ENCODE measurements at regions of chr1 and their contacts with region 1.

Region 1: GRCh38 chr1:45011837-45012638 is at the start of gene UROD:
- DNase-seq: peak; percentile 96
- H3K4me3 Mint-ChIP-seq: peak within 1 kb of the TSS; percentile 82
- H3K27ac Mint-ChIP-seq: peak within 1 kb of the TSS; percentile 92
- H3K4me1 Mint-ChIP-seq: peaks cover 41% of the 10 kb centered on the region
- H3K27me3 Mint-ChIP-seq: no peaks in the 10 kb centered on the region
- total RNA-seq, gene UROD: 105 to 106 TPM

Region 2: GRCh38 chr1:44730741-44731512 is 281.1 kb before region 1 on chr1 and contains the start of gene RNU5D-1:
- CTCF ChIA-PET with region 1: interaction called, 9 read pairs
- POLR2A ChIA-PET with region 1: interaction called, 26 read pairs
- intact Hi-C with region 1: loop called (anchors 2 kb)
- DNase-seq: peak; percentile 96
- H3K4me3 Mint-ChIP-seq: peak within 1 kb of the TSS; percentile 69
- H3K27ac Mint-ChIP-seq: peak within 1 kb of the TSS; percentile 100
- H3K4me1 Mint-ChIP-seq: peaks cover 37% of the 10 kb centered on the region
- H3K27me3 Mint-ChIP-seq: peaks cover 3% of the 10 kb centered on the region
- total RNA-seq, gene RNU5D-1: not detected

Region 3: GRCh38 chr1:44807262-44808062 is 204.6 kb before region 1 on chr1 and contains the start of gene DYNLT4:
- CTCF ChIA-PET with region 1: interaction called, 3 read pairs
- POLR2A ChIA-PET with region 1: interaction called, 11 read pairs
- intact Hi-C with region 1: loop called (anchors 10 kb)
- DNase-seq: peak; percentile 95
- H3K4me3 Mint-ChIP-seq: peak within 1 kb of the TSS; percentile 73
- H3K27ac Mint-ChIP-seq: peak within 1 kb of the TSS; percentile 98
- H3K4me1 Mint-ChIP-seq: peaks cover 90% of the 10 kb centered on the region
- H3K27me3 Mint-ChIP-seq: no peaks in the 10 kb centered on the region
- total RNA-seq, gene DYNLT4: 0.40 to 0.41 TPM

Region 4: DNA sequence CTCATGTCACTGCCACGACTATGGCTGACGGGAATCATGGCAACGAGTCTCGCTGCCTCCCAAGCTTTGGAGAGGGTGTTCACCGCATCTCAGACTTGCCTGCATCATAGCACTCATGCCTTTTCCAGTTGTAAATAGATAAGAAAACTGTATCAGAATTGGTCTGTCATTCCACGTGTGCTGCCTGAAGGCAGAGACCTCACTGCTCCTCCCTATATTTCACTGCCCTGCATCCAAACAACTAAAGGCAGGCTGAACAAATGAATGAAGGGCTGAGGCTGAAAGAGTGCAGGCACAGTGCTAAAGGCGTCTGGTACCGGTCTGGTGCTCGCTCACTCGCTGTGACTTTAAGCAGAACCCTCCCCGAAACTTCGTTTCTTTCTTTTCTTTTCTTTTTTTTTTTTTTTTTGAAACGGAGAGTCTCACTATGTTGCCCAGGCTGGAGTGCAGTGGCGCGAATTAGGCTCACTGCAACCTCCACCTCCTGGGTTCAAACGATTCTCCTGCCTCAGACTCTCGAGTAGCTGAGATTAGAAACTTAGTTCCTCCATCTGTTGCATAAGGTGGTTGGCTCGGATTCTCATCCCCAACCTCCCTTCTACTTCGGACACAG is 26.2 kb before region 1 on chr1:
- CTCF ChIA-PET with region 1: interaction called, 8 read pairs
- POLR2A ChIA-PET with region 1: interaction called, 20 read pairs
- intact Hi-C with region 1: loop called (anchors 1 kb)
- DNase-seq: no peak
- H3K4me3 Mint-ChIP-seq: peak overlapping the region; percentile 99
- H3K27ac Mint-ChIP-seq: peak overlapping the region; percentile 85
- H3K4me1 Mint-ChIP-seq: peaks cover 29% of the 10 kb centered on the region
- H3K27me3 Mint-ChIP-seq: no peaks in the 10 kb centered on the region

Region 5: GRCh38 chr1:45326627-45327623 is 314.9 kb after region 1 on chr1 and contains the start of gene HPDL:
- CTCF ChIA-PET with region 1: interaction called, 6 read pairs
- POLR2A ChIA-PET with region 1: interaction called, 10 read pairs
- intact Hi-C with region 1: no loop called
- DNase-seq: peak; percentile 77
- H3K4me3 Mint-ChIP-seq: peak within 1 kb of the TSS; percentile 76
- H3K27ac Mint-ChIP-seq: peak within 1 kb of the TSS; percentile 45
- H3K4me1 Mint-ChIP-seq: peaks cover 16% of the 10 kb centered on the region
- H3K27me3 Mint-ChIP-seq: no peaks in the 10 kb centered on the region
- total RNA-seq, gene HPDL: 12.7 to 14.3 TPM

Region 6: DNA sequence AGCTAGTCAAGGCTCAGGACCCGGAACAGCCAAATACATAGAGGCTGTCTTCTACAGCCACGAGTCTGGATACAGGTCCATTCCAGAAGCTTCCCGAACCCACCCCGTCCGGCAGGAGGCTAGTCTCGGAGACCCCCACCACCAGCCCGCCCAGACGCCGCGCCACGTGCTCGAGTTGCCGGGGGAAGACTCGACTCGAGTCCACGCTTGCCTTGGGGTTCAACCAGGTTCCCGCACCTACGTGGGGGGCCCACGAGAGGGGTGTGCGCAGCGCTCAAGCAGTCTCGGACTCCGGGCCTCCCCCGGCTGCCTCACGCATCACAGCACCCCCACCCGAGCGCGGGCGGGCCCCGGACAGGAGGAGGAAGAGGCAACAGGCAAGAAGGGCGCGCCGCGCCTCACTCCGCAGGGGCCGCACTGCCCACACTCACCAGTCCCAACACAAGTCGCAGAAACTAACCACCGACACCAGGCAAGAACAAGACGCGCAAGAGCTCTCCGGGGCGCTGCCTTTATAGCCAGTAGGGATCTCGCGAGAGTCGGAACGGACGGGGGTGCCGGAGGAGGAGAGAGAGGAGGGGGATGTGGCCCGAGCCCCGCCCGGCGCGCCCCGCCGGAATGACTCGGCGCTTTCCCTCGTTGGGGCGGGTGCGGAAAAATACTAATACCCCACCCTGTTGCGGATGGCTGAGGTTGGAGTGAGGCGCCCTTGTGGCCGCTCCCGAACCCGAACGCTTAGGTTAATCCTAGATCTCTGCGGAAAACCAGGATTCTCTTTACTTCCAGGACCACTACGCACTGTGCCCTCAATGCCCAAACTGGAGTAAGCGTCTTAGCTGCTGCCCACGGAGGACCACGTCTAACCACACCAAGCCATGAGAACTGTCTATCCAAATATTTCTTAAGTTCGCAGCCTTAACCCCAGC is 509.6 kb after region 1 on chr1 and contains the start of gene PRDX1:
- CTCF ChIA-PET with region 1: interaction called, 3 read pairs
- POLR2A ChIA-PET with region 1: interaction called, 11 read pairs
- intact Hi-C with region 1: no loop called
- DNase-seq: peak; percentile 98
- H3K4me3 Mint-ChIP-seq: peak within 1 kb of the TSS; percentile 94
- H3K27ac Mint-ChIP-seq: peak within 1 kb of the TSS; percentile 94
- H3K4me1 Mint-ChIP-seq: peaks cover 43% of the 10 kb centered on the region
- H3K27me3 Mint-ChIP-seq: peaks cover 1% of the 10 kb centered on the region
- total RNA-seq, gene PRDX1: 479 to 481 TPM

Measured in activated CD4-positive, alpha-beta memory T cell treated with anti-CD3 and anti-CD28 coated beads for 36 hours (primary cell).